GM12878 (cell line): ENCODE measurements at regions of chr9 and their contacts with region 1.

Region 1: DNA sequence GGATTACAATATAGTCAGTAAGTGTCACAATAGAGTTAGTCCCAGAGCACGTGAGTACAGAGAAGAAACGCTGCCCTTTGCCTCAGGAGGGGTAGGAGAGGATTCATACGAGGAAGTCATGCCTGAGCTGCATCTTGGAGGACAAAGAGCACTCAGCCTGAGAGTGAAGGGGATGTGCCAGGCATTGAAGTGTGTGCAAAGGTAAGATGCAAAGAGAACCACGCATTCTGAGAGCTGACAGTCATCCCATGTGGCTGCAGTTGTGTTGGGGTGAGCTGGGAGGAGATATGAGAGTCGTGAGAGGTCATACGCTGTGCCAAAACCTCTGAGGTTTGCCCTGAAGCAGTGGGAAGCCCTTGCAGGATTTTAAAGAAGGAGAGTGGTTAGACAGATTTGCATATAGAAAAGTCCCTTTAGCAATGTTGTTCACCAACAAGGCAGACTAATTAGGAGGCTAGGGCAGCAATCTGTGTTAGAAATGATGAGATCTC is 97.5 kb downstream of the PIP5K1B start:
- DNase-seq: peak; percentile 91
- ATAC-seq: peak; percentile 98
- H3K4me3 ChIP-seq: peak overlapping the region; percentile 27; the same call in 1 of the 2 replicates
- H3K27ac ChIP-seq: peak overlapping the region; percentile 30; the same call in 1 of the 2 replicates
- H3K4me1 ChIP-seq: peaks cover 32% of the 10 kb centered on the region
- H3K27me3 ChIP-seq: no peaks in the 10 kb centered on the region
- CTCF ChIP-seq: no peak
- EP300 ChIP-seq: no peak; a peak in 1 of 4 replicates
- POLR2A ChIP-seq: 0 out of 2 replicates have a peak, but pooled peaks have one; percentile 41
- RAD21 ChIP-seq: 0 out of 2 replicates have a peak, but pooled peaks have one; percentile 6

Region 2: DNA sequence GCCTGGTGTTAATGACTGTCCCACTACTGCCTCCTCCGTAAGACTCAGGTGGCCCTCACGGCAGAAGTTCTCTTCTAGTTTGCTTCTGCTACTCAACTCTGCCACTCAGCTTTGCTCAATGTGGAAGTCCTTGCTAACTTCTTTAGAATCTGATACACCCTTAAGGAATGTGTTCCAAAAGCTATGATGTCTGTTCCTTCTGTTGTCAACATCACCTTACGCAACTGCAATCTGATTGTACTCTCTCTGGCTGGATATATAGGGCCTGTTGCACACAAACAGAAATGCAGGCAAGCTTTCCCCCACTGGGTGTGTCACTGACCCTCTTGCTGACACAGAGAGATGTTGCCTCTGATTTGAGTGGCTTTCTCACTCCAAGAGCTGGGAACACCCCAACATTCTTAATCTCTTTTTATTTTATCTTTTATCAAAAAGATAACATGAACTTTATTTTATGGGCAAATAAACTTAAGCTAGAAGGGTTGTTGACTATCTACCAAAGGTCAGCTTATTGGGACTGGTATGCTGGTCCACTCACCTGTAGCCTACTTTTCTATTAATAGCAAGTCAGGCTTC is 287.2 kb before region 1 on chr9:
- CTCF ChIA-PET with region 1: no interaction called
- POLR2A ChIA-PET with region 1: no interaction called
- RAD21 ChIA-PET with region 1: no interaction called
- SMC1A ChIA-PET with region 1: no interaction called
- in situ Hi-C with region 1: no loop called
- intact Hi-C with region 1: no loop called
- DNase-seq: no peak
- ATAC-seq: no peak
- H3K4me3 ChIP-seq: no peak overlapping the region
- H3K27ac ChIP-seq: no peak overlapping the region
- H3K4me1 ChIP-seq: no peaks in the 10 kb centered on the region
- H3K27me3 ChIP-seq: no peaks in the 10 kb centered on the region; a peak in 1 of 4 replicates
- CTCF ChIP-seq: no peak
- EP300 ChIP-seq: no peak
- POLR2A ChIP-seq: no peak
- RAD21 ChIP-seq: no peak

Region 3: DNA sequence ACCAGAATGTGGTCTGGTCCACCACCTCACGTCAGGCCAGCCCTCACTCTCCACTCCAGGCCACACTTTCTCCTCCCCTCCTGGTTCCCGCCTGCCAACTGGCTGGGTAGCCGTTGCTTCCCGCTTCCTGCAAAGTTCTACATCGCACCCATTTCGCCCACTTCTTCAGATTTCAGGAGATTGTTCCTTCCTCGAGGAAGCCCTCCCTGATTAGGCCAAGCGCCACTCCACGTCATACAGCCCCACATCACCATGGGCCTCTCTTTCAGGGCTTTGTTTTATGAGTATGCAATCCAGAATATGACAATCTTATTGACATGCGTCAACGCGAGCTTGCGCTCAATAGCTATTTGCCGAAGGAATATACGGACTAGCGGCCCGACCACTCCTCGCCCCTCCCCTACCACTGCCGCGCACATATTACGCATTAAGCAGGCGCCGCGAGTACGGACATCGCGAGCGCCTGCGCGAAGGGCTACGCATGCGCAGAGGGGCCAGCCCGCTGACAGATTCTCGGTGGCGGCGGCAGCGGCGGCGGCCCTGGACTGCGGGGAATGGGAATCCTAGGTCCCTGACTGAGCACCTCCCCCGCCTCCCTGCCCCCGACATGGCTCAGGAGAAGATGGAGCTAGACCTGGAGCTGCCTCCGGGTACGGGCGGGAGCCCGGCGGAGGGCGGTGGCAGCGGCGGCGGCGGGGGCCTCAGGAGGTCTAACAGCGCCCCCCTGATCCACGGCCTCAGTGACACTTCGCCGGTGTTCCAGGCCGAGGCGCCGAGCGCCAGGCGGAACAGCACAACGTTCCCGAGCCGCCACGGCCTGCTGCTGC is 22.8 kb before region 1 on chr9:
- CTCF ChIA-PET with region 1: interaction called, 9 read pairs
- POLR2A ChIA-PET with region 1: interaction called, 4 read pairs
- RAD21 ChIA-PET with region 1: no interaction called
- SMC1A ChIA-PET with region 1: interaction called, 3 read pairs
- in situ Hi-C with region 1: no loop called
- intact Hi-C with region 1: loop called (anchors 2 kb)
- DNase-seq: peak; percentile 77
- ATAC-seq: peak; percentile 90
- H3K4me3 ChIP-seq: peak overlapping the region; percentile 83
- H3K27ac ChIP-seq: peak overlapping the region; percentile 92
- H3K4me1 ChIP-seq: peaks cover 2% of the 10 kb centered on the region; the same call in 1 of the 2 replicates
- H3K27me3 ChIP-seq: no peaks in the 10 kb centered on the region
- CTCF ChIP-seq: peak; percentile 31 to 56 (median 38); a peak in 5 of 6 replicates
- EP300 ChIP-seq: no peak
- POLR2A ChIP-seq: peak; percentile 93
- RAD21 ChIP-seq: peak; percentile 37